Aorta (tissue), 5 donors: ENCODE measurements at regions of chr11 and their contacts with region 1.

Region 1: DNA sequence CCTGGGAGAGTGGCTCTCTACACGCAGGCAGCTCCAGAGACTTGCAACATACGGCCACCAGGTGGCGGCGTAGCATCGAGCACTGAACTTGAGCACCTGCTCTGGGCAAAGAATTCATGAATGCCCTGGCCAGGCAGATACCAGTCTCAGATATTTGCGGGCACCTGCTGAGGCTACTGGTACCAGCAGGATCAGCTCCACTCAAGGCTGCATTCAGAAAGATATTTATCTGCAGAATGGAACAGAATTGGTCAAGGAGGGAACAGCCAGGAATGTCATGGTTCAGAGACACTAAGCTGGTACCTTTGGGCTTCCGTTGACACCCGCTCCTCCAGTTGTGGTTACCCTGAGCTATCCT is 10.8 kb upstream of the CCDC86 start:
- DNase-seq: peak; percentile 85 to 95
- ATAC-seq: peak; percentile 88
- H3K4me3 ChIP-seq: no peak overlapping the region
- H3K27ac ChIP-seq: no peak overlapping the region
- H3K4me1 ChIP-seq: no peaks in the 10 kb centered on the region
- H3K27me3 ChIP-seq: no peaks in the 10 kb centered on the region

Region 2: DNA sequence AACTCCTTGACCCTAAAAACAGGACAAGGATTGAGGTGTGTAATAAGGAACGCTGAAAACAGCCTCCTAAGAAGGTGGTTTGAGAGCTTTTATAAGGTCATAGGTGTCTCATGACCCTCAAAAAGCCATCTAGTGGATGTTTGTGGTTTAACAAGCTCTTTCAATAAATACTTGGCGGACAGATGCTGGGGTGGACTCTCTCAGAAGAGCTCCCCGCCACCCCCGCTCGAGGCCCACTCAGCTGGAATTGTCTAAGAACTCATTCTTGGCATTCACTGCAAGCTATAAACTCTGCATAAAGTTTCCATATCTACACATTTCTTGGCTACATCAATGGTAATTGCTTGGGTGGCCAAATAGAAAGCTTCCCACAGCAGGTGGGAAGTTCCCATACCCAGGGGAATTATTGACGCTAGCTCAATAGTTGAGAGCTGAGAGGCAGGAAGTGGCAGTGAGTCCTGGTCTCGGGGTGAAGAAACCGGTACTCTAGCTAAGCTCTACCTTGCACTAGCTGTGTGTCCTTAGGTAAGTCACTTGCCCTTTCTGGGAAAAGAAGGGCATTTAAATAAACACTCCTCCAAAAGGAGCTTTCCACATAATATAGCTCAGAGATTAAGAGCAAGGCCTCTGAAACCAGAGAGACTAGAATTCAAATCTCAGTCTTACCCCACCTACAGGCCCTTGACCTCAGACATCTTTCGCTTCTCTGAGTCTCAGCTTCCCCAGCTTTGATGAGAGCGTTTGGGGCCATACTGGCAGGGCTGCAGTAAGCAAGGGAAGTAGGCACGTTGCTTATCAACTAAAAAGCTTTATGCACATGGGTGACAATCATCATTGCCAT is 68.1 kb before region 1 on chr11:
- intact Hi-C with region 1: no loop called
- DNase-seq: peak in 1 of 2 donors; percentile 41
- ATAC-seq: no peak
- H3K4me3 ChIP-seq: no peak overlapping the region
- H3K27ac ChIP-seq: no peak overlapping the region
- H3K4me1 ChIP-seq: no peaks in the 10 kb centered on the region
- H3K27me3 ChIP-seq: peaks cover 0 to 2% of the 10 kb centered on the region in 2 donors

Region 3: DNA sequence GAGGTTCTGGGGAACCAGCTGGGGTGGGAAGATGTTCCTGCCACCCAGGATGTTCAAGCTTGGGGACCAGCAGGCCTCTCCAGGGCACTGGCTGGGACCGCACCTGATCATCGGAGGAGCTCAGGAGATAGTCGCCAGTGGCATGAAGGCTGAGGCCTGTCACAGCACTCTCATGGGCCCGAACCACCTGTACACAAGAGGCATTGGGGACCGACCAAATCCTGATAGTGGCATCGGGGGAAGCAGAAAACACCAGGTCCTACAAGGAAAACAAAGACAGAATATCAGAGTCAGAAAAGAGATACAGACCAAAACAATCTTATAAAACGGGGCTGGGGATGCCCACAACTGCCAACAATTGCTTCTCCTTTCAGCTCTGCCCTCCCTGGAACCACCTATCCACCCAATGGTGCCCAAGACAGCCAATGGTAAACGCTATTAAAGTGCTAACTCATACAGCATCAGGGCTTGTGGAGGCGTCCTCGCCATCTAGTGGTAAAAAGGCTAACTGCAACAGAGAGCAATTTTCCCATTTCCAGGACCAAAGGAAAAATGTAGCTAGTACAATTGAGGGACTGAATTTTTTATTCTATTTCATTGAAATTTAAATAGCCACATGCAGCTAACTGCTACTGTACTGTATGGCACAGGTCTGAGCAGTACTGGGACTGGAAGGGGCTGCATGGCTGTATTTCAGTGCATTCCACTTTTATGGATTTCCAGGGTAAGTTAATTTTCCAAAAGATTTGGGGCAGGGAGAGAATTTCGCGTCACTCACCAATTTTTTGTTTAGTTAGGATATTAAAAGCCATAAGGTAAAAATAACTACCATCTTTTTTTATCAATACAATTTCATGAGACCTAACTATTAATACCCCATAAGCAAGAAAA is 68.2 kb after region 1 on chr11:
- intact Hi-C with region 1: loop called (anchors 1 kb)
- DNase-seq: no peak
- ATAC-seq: peak; percentile 82
- H3K4me3 ChIP-seq: no peak overlapping the region
- H3K27ac ChIP-seq: no peak overlapping the region
- H3K4me1 ChIP-seq: no peaks in the 10 kb centered on the region
- H3K27me3 ChIP-seq: no peaks in the 10 kb centered on the region

Region 4: GRCh38 chr11:61129639-61130523 is 298.8 kb after region 1 on chr11:
- intact Hi-C with region 1: loop called in 1 of 2 experiments (anchors 5 kb)
- DNase-seq: peak; percentile 91 to 95
- ATAC-seq: peak; percentile 88
- H3K4me3 ChIP-seq: no peak overlapping the region
- H3K27ac ChIP-seq: no peak overlapping the region
- H3K4me1 ChIP-seq: no peaks in the 10 kb centered on the region
- H3K27me3 ChIP-seq: no peaks in the 10 kb centered on the region

Region 5: GRCh38 chr11:61187505-61188130 is 356.5 kb after region 1 on chr11:
- intact Hi-C with region 1: loop called (anchors 2 kb)
- DNase-seq: peak; percentile 77 to 88
- ATAC-seq: peak; percentile 77
- H3K4me3 ChIP-seq: no peak overlapping the region
- H3K27ac ChIP-seq: no peak overlapping the region
- H3K4me1 ChIP-seq: no peaks in the 10 kb centered on the region
- H3K27me3 ChIP-seq: no peaks in the 10 kb centered on the region